ENCODE measurements at regions of chr19 and their contacts with region 1.

Region 1: DNA sequence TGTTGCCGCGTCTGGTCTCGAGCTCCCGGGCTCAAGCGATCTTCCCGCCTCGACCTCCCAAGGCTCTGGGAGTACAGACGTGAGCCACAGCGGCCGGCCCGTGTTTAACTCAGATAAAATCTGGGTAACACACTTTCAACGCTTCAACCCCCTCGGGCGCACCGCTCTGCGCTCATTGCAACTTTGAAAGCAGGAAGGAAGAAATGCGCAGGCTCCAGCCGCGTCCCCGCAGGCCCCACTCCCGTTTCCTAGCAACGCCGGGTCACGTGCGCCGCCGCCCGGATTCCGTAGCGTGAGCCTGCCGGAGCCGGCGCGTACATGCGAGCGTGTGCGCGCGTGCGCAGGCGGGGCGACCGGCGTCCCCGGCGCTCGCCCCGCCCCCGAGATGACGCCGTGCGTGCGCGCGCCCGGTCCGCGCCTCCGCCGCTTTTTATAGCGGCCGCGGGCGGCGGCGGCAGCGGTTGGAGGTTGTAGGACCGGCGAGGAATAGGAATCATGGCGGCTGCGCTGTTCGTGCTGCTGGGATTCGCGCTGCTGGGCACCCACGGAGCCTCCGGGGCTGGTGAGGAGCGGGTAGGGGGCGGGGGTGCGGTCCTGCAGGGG is at the start of gene BSG:
- DNase-seq: peak; percentile 98 to 99
- ATAC-seq: peak; percentile 76 to 84 (median 82)
- H3K4me3 ChIP-seq: peak within 1 kb of the TSS; percentile 97
- H3K27ac ChIP-seq: peak within 1 kb of the TSS; percentile 94
- H3K4me1 ChIP-seq: peaks cover 41% of the 10 kb centered on the region
- H3K27me3 ChIP-seq: no peaks in the 10 kb centered on the region
- CTCF ChIP-seq: no peak
- total RNA-seq, gene BSG: 172 to 381 (median 300) TPM

Region 2: DNA sequence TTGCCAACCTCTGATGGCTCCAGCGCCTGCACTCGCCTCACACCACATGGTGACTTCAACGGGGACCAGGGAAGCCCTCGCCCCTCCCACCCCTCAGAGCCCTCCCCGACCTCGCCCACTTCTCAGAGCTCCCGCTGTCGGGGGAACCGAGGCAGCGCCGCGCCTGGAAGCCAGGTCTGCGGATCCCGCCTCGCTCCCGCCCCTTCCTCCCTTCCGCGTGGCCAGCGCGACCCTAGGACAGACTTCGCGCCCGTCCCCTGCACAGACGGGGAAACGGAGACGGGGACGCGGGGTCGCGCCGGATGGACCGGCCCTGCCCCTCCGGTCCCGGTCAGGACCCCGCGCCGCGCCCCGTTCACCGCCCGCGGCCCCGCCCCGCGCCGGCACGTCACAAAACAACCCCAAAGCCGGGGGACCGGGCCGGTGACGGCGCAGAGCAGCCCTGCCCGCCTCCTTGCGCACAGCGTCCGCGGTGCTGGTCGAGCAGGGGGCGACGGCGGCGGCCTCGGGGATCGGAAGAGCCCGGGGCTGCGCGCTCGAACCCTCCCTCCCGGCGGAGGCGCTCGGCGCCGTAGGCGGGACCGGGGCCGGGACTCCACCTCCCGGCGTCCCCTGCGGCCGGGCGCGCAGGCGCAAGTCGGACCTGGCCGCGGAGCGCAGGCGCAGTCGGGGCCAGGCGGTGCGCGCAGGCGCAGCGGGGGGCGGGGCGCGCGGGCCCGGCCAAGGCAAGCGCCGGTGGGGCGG is 41.1 kb before region 1 on chr19:
- intact Hi-C with region 1: loop called (anchors 1 to 5 kb)
- DNase-seq: peak; percentile 87 to 92
- ATAC-seq: peak; percentile 78 to 86 (median 81)
- H3K4me3 ChIP-seq: peak overlapping the region; percentile 89
- H3K27ac ChIP-seq: peak overlapping the region; percentile 98
- H3K4me1 ChIP-seq: peaks cover 27% of the 10 kb centered on the region
- H3K27me3 ChIP-seq: peaks cover 0 to 5% (median 0%) of the 10 kb centered on the region in 3 donors
- CTCF ChIP-seq: no peak

Region 3: DNA sequence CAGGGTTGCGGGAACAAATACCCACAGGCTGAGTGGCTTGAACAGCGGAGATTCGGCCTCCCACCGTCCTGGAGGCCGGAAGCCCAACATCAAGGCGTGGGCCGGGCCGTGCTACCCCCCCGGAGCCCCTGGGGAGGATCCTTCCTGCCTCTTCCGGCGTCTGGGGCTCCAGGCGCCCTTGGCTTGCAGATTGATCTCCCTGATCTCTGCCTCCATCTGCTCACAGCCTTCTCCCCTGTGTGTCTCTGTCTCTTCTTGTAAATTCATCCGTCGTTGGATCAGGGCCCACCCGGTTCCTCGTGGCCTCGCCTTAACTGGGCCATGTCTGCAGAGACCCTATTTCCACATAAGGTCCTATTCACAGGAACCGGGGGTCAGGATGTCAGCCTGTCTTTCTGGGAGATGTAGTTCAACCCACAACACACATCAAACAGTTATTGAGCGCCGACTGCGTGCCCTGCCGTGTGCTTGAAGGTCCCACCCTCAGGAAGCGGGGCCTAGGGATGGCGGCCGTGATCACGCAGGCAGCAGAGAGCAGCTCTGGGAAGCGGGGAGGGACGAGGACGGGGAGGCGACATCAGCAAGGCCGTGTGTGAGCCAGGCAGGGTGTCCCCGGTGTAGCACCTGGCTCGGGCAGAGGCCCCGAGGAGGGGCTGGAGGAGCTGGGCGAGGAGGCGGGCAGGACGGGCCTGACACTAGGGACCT is 38.7 kb after region 1 on chr19:
- intact Hi-C with region 1: no loop called
- DNase-seq: peak; percentile 62 to 79
- ATAC-seq: peak in 2 of 4 donors; percentile 19 to 51
- H3K4me3 ChIP-seq: peak overlapping the region; percentile 25
- H3K27ac ChIP-seq: no peak overlapping the region
- H3K4me1 ChIP-seq: no peaks in the 10 kb centered on the region
- H3K27me3 ChIP-seq: peaks cover 0 to 27% (median 0%) of the 10 kb centered on the region in 3 donors
- CTCF ChIP-seq: no peak

Region 4: GRCh38 chr19:628159-628558 is 55.9 kb after region 1 on chr19:
- intact Hi-C with region 1: loop called (anchors 5 kb)
- DNase-seq: no peak
- ATAC-seq: no peak
- H3K4me3 ChIP-seq: no peak overlapping the region
- H3K27ac ChIP-seq: no peak overlapping the region
- H3K4me1 ChIP-seq: peaks cover 9% of the 10 kb centered on the region
- H3K27me3 ChIP-seq: no peaks in the 10 kb centered on the region
- CTCF ChIP-seq: no peak

Region 5: DNA sequence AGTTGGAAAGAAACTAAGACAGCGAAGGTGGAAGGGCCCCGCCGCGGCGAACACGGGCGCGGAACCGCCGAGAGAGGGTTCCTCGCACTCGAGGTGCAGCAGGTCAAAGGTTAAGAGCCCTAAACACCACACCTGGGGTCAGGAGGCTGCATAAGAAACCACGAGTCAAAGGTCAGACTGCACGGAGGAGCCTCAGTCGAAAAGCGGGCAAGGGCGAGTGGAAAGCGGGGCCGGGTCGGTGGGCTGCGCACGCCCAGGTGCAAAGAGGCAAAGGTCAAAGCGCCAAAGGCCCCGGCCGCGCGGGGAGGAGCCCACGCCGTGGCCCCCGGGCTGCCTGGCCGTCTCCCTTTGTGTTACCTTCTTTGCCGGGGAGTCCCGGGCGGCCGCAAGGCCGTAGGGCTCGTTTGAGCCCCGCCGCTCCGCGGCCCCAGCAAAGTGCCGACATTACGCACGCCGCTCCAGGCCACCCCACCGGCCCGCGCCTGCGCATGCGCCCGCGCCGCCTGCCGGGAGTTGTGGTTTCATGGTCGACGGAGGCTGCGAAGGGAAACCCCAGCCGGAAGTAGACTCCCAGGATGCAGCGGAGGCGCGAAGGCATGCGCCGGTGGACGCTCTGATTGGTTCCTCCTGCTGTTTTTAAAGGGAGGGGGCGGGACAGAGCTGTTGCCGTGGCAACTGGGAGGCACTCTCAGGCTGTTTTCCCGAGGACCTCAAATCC is 61.0 kb after region 1 on chr19 and contains the start of gene POLRMT:
- intact Hi-C with region 1: loop called (anchors 5 kb)
- DNase-seq: peak; percentile 99
- ATAC-seq: peak; percentile 98 to 99 (median 99)
- H3K4me3 ChIP-seq: peak within 1 kb of the TSS; percentile 96
- H3K27ac ChIP-seq: peak within 1 kb of the TSS; percentile 86
- H3K4me1 ChIP-seq: peaks cover 14% of the 10 kb centered on the region
- H3K27me3 ChIP-seq: no peaks in the 10 kb centered on the region
- CTCF ChIP-seq: no peak
- total RNA-seq, gene POLRMT: 66.1 to 99.8 (median 81.4) TPM

Region 6: DNA sequence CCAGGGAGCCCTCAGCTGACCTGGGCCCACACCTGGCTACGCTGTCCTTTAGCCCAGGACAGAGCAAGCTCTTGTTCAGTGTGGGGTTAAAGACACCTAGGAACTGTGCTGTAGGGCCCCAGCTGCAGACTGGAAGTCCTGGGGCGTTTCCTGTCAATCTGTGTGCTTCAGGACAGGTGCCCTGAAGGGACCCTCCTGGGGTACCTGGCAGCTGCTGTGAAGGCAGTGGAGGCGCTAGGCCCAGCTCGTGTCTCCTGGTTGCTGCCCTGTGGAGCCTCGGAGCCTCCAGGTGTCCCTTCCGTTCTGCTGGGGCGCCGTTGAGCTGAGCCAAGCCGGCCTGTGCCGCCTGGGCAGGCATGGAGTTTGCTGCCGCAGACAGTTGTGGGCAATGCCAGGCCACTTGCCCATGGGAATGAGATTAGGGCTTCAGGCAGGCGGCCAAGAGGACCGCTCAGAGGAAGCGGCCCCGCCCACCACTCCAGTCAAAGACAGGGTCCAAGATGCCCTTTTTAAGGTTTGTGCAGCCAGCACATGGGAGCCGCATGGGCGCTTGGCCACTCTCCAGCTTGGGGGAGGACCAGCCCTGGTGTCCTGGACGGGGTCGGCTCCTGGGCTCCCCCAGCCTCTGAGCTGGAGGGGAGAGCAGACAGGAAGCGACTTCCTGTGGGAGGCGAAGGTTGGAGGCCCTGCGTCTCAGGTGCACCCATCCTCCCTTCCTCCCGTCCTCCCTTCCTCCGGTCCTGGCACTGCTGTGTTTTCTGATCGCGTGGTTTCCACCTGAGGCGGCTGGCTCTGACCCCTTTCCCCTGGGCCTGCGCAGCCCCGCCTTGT is 229.0 kb after region 1 on chr19:
- intact Hi-C with region 1: loop called in 1 of 2 experiments (anchors 5 kb)
- DNase-seq: peak; percentile 63 to 77
- ATAC-seq: no peak
- H3K4me3 ChIP-seq: peak overlapping the region; percentile 81
- H3K27ac ChIP-seq: peak overlapping the region; percentile 60
- H3K4me1 ChIP-seq: peaks cover 46% of the 10 kb centered on the region
- H3K27me3 ChIP-seq: no peaks in the 10 kb centered on the region
- CTCF ChIP-seq: no peak

Region 7: DNA sequence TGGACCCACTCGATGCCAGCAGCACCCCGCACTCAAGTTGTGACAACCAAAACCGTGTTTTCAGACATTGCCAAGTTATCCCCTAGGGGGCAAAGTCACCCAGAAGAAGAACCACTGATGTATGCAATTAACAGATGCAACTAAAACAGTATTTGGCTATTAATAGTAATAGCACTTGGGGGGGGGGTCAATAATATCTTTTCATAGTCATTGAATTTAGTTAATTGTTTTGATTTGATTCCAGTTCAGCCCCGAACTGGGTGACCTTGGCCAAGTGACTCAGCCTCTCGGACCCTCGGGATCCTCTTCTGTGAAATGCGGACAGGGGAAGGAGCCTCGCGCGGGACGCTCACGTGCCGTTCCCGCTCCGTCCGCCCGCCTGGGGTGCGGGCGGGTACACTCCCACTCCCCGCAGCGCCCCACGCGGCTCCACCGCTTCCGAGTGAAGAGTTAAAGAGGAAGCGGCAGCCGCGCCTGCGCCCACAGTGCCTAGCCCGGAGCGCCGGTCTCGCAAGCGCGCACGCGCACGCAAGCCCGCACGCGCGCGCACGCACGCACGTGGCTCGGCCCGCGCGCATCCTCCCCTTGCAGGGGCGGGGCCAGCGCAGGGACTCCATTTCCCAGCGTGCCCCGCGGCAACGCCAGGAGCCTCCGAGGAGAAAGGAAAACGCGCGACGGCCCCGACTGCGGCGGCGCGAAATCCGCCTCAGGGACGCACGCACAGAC is 834.7 kb after region 1 on chr19:
- intact Hi-C with region 1: loop called in 1 of 2 experiments (anchors 10 kb)
- DNase-seq: peak; percentile 100
- ATAC-seq: peak; percentile 84 to 92 (median 88)
- H3K4me3 ChIP-seq: peak overlapping the region; percentile 97
- H3K27ac ChIP-seq: peak overlapping the region; percentile 82
- H3K4me1 ChIP-seq: peaks cover 36% of the 10 kb centered on the region
- H3K27me3 ChIP-seq: no peaks in the 10 kb centered on the region
- CTCF ChIP-seq: peak; percentile 29

Measured in psoas muscle (tissue), 8 donors.